ENCODE measurements at regions of chr10 and their contacts with region 1.

Region 1: DNA sequence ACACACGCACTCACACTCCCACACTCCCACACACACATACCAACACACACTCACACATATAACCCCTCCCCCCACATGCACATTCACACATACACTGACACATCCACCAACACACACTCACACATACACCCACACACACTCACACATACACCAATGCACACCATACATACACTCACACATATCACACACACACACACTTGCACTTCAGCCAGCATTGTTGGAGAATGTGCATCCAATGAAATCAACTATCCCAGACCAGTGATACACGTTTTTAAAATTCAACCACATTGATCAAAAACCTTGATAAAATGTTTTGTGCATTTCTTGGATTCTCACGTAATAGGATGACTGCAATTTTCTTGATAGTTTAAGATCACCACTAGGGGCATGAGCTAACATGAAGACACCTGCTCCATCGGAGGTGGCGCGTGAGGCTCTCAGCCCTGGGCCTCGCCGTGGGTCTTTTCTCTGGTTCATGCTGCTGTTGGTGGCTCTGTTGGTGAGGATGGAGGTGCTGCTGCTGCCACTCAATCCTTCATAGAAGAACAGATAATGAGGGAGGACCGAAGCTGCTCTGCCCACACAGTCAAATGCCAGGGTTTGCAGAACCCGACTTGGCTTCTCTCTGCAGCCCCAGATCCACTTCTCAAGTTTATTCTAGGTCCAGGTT is 32.2 kb upstream of the CHST15 start:
- DNase-seq: no peak
- H3K4me3 ChIP-seq: no peak overlapping the region
- H3K27ac ChIP-seq: no peak overlapping the region
- H3K4me1 ChIP-seq: no peaks in the 10 kb centered on the region; a peak in 2 of 7 replicates
- H3K27me3 ChIP-seq: peaks cover 0 to 2% (median 0%) of the 10 kb centered on the region in 4 experiments; a peak in 1 of 7 replicates
- CTCF ChIP-seq: peak; percentile 41 to 64 (median 48)
- EP300 ChIP-seq: no peak
- POLR2A ChIP-seq: no peak
- RAD21 ChIP-seq: peak; percentile 47 to 56

Region 2: DNA sequence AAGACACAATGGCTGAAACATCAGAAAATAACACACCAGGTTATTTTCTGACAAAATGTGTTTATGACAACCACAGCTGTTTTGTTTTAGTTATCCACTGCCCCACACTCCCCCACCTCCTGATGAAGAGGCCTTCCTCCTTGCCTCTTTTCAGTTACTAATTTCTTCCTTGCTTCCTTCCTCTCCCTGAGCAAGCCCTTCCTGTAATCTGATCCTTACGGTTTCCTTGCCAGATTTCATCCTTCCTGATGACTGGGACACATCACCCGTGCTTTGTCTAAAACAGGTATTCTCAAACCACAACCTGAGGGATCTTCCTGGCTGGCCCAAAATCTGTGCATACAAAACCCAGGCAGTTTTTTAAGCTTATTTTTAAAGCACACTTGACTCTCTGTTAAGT is 71.6 kb before region 1 on chr10:
- CTCF ChIA-PET with region 1: no interaction called
- POLR2A ChIA-PET with region 1: no interaction called
- DNase-seq: no peak
- H3K4me3 ChIP-seq: no peak overlapping the region
- H3K27ac ChIP-seq: no peak overlapping the region
- H3K4me1 ChIP-seq: peaks cover 0 to 6% (median 2%) of the 10 kb centered on the region in 4 experiments; a peak in 3 of 7 replicates
- H3K27me3 ChIP-seq: no peaks in the 10 kb centered on the region
- CTCF ChIP-seq: no peak
- EP300 ChIP-seq: no peak
- POLR2A ChIP-seq: no peak
- RAD21 ChIP-seq: no peak

Region 3: GRCh38 chr10:124106241-124106879 is 19.2 kb before region 1 on chr10:
- CTCF ChIA-PET with region 1: interaction called, 22 read pairs
- POLR2A ChIA-PET with region 1: no interaction called
- DNase-seq: no peak
- H3K4me3 ChIP-seq: no peak overlapping the region
- H3K27ac ChIP-seq: no peak overlapping the region
- H3K4me1 ChIP-seq: peaks cover 0 to 2% (median 0%) of the 10 kb centered on the region in 4 experiments; a peak in 3 of 7 replicates
- H3K27me3 ChIP-seq: peaks cover 0 to 2% (median 0%) of the 10 kb centered on the region in 4 experiments; a peak in 1 of 7 replicates
- CTCF ChIP-seq: no peak
- EP300 ChIP-seq: no peak
- POLR2A ChIP-seq: no peak
- RAD21 ChIP-seq: no peak

Measured in H1 (cell line).